ENCODE measurements at regions of chr6 and their contacts with region 1.

Region 1: GRCh38 chr6:112180095-112180820 is 74.1 kb downstream of the LAMA4 start:
- DNase-seq: no peak
- H3K4me3 ChIP-seq: no peak overlapping the region
- H3K27ac ChIP-seq: peak overlapping the region in 1 of 4 donors; percentile 17
- H3K4me1 ChIP-seq: peaks cover 0 to 23% (median 0%) of the 10 kb centered on the region in 3 donors
- H3K27me3 ChIP-seq: no peaks in the 10 kb centered on the region
- CTCF ChIP-seq: peak; percentile 52 to 79 (median 64)
- POLR2A ChIP-seq: no peak

Region 2: DNA sequence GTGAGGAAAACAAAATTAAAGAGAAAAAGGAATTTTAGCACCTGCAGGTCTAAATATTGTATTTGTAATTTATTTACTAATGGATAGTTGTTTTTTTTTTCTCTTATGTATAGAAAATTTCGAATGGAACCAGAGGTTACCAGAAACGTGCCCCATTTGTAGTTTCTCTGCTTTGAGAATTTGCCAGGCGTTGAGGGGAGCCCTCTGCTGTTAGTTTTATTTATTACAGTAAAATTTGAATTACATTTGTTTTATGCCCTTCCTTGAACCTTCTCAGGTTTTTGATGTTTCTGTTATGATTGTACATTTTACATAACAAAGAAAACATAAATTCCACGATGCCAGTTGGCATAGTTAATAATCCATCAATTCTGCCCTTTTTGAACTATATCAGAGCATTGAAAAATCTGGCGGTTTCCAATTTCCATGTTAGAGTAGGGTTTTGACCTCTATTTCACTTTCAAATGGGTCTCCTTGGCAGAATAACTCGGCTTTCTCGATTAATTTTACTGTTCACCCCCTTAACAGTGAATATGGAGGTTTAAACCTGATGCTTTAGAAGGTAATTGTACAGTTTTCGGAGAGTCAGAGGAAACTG is 131.8 kb after region 1 on chr6:
- intact Hi-C with region 1: loop called (anchors 5 kb)
- DNase-seq: no peak
- H3K4me3 ChIP-seq: no peak overlapping the region
- H3K27ac ChIP-seq: no peak overlapping the region
- H3K4me1 ChIP-seq: peaks cover 0 to 25% (median 3%) of the 10 kb centered on the region in 3 donors
- H3K27me3 ChIP-seq: no peaks in the 10 kb centered on the region
- CTCF ChIP-seq: peak; percentile 24 to 68 (median 62)
- POLR2A ChIP-seq: no peak

Region 3: DNA sequence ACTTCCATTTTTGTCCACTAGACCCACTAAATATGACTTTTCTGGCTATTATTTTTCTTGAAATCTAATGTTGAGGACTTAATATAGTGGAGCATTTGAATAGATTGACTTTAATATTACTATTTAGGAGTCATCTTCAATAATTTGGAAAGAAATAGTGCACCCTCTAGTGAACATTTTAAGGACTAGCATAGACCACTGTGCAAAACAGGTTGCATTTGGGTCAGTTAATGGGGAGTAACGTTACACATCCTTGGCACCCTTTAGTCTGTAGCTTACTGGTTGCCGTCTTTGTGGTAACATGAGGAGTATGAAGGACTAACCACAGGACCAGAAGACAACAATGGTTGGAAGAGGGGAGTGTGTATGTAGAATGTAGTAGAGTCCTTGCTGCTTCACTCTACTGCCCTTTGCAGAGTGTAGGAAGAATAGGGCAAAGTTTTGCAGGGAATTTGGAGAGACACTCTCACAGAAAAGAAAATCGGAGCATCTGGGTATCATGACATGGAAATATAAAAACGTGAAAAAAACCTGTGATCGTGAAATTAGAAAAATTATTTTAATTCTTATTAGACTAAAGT is 192.1 kb after region 1 on chr6:
- intact Hi-C with region 1: loop called (anchors 10 kb)
- DNase-seq: no peak
- H3K4me3 ChIP-seq: no peak overlapping the region
- H3K27ac ChIP-seq: no peak overlapping the region
- H3K4me1 ChIP-seq: peaks cover 0 to 1% (median 0%) of the 10 kb centered on the region in 3 donors
- H3K27me3 ChIP-seq: peaks cover 0 to 1% (median 0%) of the 10 kb centered on the region in 4 donors
- CTCF ChIP-seq: peak in 4 of 6 experiments; percentile 24 to 51 (median 34)
- POLR2A ChIP-seq: no peak

Measured in esophagus squamous epithelium (tissue), 5 donors.